WTC11 (cell line): ENCODE measurements at regions of chr18 and their contacts with region 1.

Region 1: GRCh38 chr18:3454365-3455089 is 4.6 kb downstream of the TGIF1 start:
- DNase-seq: peak; percentile 45
- ATAC-seq: peak; percentile 7
- H3K4me3 Mint-ChIP-seq: peak overlapping the region; percentile 96
- H3K27ac Mint-ChIP-seq: peak overlapping the region; percentile 98
- H3K4me1 Mint-ChIP-seq: peaks cover 62% of the 10 kb centered on the region
- H3K27me3 Mint-ChIP-seq: no peaks in the 10 kb centered on the region
- CTCF ChIP-seq: peak; percentile 46

Region 2: DNA sequence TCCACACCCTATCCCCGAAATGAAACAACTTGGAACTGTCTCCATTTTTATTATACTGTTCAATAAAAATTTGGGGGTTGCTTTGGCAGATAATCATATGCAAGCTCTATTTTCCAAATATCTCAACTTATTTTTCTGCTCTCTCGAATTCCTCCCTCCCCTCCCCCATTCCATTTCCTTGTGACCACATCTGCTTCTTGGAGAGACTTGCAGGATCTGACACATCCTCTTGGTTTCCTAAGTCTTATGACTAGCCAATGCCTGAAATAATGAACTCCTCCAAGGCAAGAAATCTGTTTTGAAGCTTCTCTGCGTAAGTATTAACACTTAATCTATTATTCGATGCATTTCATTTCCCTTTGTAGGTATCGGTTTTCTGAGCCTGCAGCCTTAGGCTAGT is 11.5 kb after region 1 on chr18:
- CTCF ChIA-PET with region 1: interaction called, 22 read pairs
- POLR2A ChIA-PET with region 1: no interaction called
- DNase-seq: no peak
- ATAC-seq: no peak
- H3K4me3 Mint-ChIP-seq: no peak overlapping the region
- H3K27ac Mint-ChIP-seq: peak overlapping the region; percentile 97
- H3K4me1 Mint-ChIP-seq: peaks cover 52% of the 10 kb centered on the region
- H3K27me3 Mint-ChIP-seq: no peaks in the 10 kb centered on the region
- CTCF ChIP-seq: no peak